ENCODE measurements at regions of chr12 and their contacts with region 1.

Region 1: GRCh38 chr12:120686690-120687577 is at the start of gene MLEC:
- DNase-seq: peak; percentile 98 to 100 (median 99)
- ATAC-seq: peak; percentile 88
- H3K4me3 ChIP-seq: peak within 1 kb of the TSS; percentile 99
- H3K4me3 Mint-ChIP-seq: peak within 1 kb of the TSS; percentile 90 to 95 (median 94)
- H3K27ac ChIP-seq: peak within 1 kb of the TSS; percentile 77
- H3K27ac Mint-ChIP-seq: peak within 1 kb of the TSS; percentile 91 to 97 (median 95)
- H3K4me1 ChIP-seq: peaks cover 12 to 22% of the 10 kb centered on the region in 2 donors
- H3K4me1 Mint-ChIP-seq: peaks cover 22 to 53% (median 41%) of the 10 kb centered on the region in 7 donors
- H3K27me3 ChIP-seq: no peaks in the 10 kb centered on the region
- H3K27me3 Mint-ChIP-seq: peaks cover 0 to 3% (median 0%) of the 10 kb centered on the region in 5 donors
- total RNA-seq, gene MLEC: 27.6 to 132 (median 57.6) TPM

Region 2: DNA sequence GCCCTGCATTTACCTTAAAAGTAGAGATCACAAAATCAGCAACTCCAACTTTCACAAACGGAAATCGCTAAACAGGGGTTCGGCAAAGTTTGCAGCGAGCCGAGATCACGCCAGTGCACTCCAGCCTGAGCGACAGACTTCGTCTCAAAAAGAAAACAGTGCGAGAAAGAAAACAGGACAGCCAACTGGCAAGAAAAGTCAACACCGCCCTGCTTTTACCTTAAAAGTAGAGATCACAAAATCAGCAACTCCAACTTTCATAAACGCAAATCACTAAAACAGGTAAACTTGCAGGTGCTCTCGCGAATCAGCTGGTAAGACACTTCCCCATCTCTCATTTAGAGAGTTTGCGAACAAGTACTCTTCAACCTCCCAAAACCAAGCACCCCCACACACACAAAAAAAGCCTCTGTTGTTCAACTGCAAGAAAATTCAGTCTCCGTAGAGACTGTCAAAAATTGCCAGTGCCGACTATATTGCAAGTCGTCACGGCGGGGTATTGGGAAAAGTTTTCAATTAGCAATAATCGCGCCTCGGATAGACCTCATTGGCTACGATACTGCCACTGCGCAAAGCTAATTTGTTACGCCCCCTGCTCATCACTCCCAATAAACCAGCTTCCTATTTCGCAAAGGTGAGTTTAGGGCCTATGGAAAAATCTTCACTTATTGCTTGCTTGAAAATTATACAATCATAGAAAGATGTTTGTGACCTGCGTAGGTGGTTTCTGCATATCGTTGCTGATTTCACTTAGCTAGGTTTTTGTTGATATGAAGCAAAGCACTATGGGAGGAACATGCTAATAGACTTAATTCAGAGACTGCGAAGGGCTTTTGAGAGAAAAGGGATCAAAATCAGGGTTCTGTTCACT is 394.0 kb before region 1 on chr12 and contains the start of gene RNU4-1:
- CTCF ChIA-PET with region 1: no interaction called
- POLR2A ChIA-PET with region 1: interaction called, 3 read pairs
- intact Hi-C with region 1: loop called in 1 of 2 experiments (anchors 1 kb)
- DNase-seq: peak; percentile 51 to 93 (median 89)
- ATAC-seq: peak; percentile 58
- H3K4me3 ChIP-seq: peak within 1 kb of the TSS; percentile 64
- H3K4me3 Mint-ChIP-seq: no peak within 1 kb of the TSS
- H3K27ac ChIP-seq: peak within 1 kb of the TSS; percentile 100
- H3K27ac Mint-ChIP-seq: peak within 1 kb of the TSS in 1 of 9 donors; percentile 62
- H3K4me1 ChIP-seq: no peaks in the 10 kb centered on the region
- H3K4me1 Mint-ChIP-seq: peaks cover 0 to 9% (median 4%) of the 10 kb centered on the region in 7 donors
- H3K27me3 ChIP-seq: no peaks in the 10 kb centered on the region
- H3K27me3 Mint-ChIP-seq: peaks cover 0 to 14% (median 0%) of the 10 kb centered on the region in 5 donors
- total RNA-seq, gene RNU4-1: 319 to 3,107 (median 1,510) TPM

Region 3: DNA sequence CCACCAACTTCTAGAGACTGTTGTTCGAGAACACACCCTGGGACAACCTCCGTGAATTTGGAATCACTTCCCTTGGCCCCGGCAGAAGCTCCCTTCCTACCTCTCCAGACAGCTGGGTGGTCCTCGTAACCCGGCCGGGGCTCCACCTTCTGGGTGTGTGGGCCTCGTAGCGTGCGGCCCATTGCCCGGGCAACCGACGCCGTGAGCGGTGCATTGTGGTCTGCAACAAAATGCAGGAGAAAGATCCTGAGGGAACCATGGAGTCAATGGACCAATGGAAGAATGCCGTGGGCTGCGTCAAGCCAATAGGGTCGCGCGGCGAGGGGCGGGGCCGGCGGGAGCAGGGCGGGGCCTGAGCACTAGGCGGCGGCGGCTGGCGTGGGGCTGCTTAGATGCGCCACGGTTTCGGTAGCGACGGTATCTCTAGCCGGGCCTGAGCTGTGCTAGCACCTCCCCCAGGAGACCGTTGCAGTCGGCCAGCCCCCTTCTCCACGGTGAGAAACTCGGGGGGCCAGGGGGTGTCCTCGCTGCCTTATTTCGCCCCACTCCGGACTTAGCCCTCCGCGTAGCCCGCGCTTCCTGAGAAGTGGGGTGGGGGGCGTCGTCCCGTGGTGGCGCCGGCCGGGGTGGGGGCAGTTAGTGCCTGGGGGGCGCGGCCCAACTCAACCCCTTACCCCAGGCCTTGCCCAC is 191.1 kb before region 1 on chr12 and contains the start of gene DYNLL1:
- CTCF ChIA-PET with region 1: no interaction called
- POLR2A ChIA-PET with region 1: no interaction called
- intact Hi-C with region 1: loop called in 1 of 2 experiments (anchors 1 kb)
- DNase-seq: peak; percentile 95 to 99 (median 97)
- ATAC-seq: peak; percentile 99
- H3K4me3 ChIP-seq: peak within 1 kb of the TSS; percentile 82
- H3K4me3 Mint-ChIP-seq: peak within 1 kb of the TSS; percentile 83 to 98 (median 94)
- H3K27ac ChIP-seq: peak within 1 kb of the TSS; percentile 84
- H3K27ac Mint-ChIP-seq: peak within 1 kb of the TSS; percentile 58 to 94 (median 90)
- H3K4me1 ChIP-seq: peaks cover 9% of the 10 kb centered on the region in 2 donors
- H3K4me1 Mint-ChIP-seq: peaks cover 13 to 48% (median 33%) of the 10 kb centered on the region in 7 donors
- H3K27me3 ChIP-seq: no peaks in the 10 kb centered on the region
- H3K27me3 Mint-ChIP-seq: no peaks in the 10 kb centered on the region
- total RNA-seq, gene DYNLL1: 35.0 to 301 (median 72.7) TPM

Region 4: DNA sequence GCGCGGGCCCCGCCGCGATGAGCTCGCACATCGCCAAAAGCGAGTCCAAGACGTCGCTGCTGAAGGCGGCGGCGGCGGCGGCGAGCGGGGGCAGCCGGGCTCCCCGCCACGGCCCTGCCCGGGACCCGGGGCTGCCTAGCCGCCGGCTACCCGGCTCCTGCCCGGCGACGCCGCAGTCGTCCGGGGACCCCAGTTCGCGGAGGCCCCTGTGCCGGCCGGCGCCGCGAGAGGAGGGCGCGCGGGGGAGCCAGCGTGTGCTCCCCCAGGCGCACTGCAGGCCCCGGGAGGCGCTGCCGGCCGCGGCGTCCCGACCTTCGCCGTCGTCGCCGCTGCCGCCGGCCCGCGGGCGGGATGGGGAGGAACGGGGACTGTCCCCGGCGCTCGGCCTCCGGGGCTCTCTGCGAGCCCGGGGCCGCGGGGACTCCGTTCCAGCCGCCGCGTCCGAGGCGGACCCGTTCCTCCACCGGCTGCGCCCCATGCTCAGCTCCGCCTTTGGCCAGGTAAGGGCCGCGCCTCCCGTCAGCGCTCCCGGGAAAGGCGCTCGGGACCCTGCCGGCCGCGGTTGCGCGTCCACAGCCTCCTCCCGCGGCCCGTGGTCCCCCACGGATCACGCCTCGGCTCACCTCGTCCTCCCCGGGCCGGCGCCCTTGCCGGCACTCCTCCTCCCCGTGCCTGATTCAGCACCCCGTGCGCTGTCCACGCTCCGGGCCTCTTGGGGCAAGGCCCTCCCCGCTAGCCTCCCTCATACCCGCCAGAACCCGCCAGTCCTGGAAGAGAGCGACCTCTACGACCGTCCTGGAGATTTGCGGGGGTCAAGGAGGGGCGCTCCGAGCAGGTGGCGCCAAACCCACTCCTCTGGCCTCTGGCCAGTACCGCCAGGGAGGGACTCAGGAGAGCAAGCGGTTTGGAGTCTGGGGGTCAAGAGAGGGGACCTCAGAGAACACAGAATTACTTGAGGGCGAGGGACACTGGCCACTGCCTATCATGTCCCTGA is 45.8 kb before region 1 on chr12:
- CTCF ChIA-PET with region 1: interaction called, 11 read pairs
- POLR2A ChIA-PET with region 1: no interaction called
- intact Hi-C with region 1: loop called in 1 of 2 experiments (anchors 1 kb)
- DNase-seq: peak; percentile 28 to 66 (median 54)
- ATAC-seq: peak; percentile 81
- H3K4me3 ChIP-seq: peak overlapping the region; percentile 44
- H3K4me3 Mint-ChIP-seq: peak overlapping the region; percentile 64 to 84 (median 73)
- H3K27ac ChIP-seq: no peak overlapping the region
- H3K27ac Mint-ChIP-seq: no peak overlapping the region
- H3K4me1 ChIP-seq: peaks cover 4 to 8% of the 10 kb centered on the region in 2 donors
- H3K4me1 Mint-ChIP-seq: peaks cover 0 to 10% (median 6%) of the 10 kb centered on the region in 7 donors
- H3K27me3 ChIP-seq: peaks cover 19 to 26% of the 10 kb centered on the region in 2 donors
- H3K27me3 Mint-ChIP-seq: peaks cover 41 to 72% (median 45%) of the 10 kb centered on the region in 5 donors

Region 5: GRCh38 chr12:120669055-120669840 is 17.7 kb before region 1 on chr12:
- CTCF ChIA-PET with region 1: no interaction called
- POLR2A ChIA-PET with region 1: no interaction called
- intact Hi-C with region 1: no loop called
- DNase-seq: no peak
- ATAC-seq: no peak
- H3K4me3 ChIP-seq: no peak overlapping the region
- H3K4me3 Mint-ChIP-seq: no peak overlapping the region
- H3K27ac ChIP-seq: no peak overlapping the region
- H3K27ac Mint-ChIP-seq: no peak overlapping the region
- H3K4me1 ChIP-seq: no peaks in the 10 kb centered on the region
- H3K4me1 Mint-ChIP-seq: peaks cover 0 to 2% (median 0%) of the 10 kb centered on the region in 7 donors
- H3K27me3 ChIP-seq: no peaks in the 10 kb centered on the region
- H3K27me3 Mint-ChIP-seq: peaks cover 0 to 2% (median 0%) of the 10 kb centered on the region in 5 donors

Region 6: GRCh38 chr12:120761519-120761934 is 74.6 kb after region 1 on chr12:
- CTCF ChIA-PET with region 1: no interaction called
- POLR2A ChIA-PET with region 1: no interaction called
- intact Hi-C with region 1: loop called in 1 of 2 experiments (anchors 2 kb)
- DNase-seq: peak in 6 of 9 donors; percentile 3 to 27 (median 14)
- ATAC-seq: peak; percentile 10
- H3K4me3 ChIP-seq: no peak overlapping the region
- H3K4me3 Mint-ChIP-seq: peak overlapping the region in 7 of 10 donors; percentile 39 to 76 (median 60)
- H3K27ac ChIP-seq: peak overlapping the region; percentile 52
- H3K27ac Mint-ChIP-seq: peak overlapping the region; percentile 58 to 98 (median 87)
- H3K4me1 ChIP-seq: no peaks in the 10 kb centered on the region
- H3K4me1 Mint-ChIP-seq: peaks cover 0 to 32% (median 19%) of the 10 kb centered on the region in 7 donors
- H3K27me3 ChIP-seq: no peaks in the 10 kb centered on the region
- H3K27me3 Mint-ChIP-seq: no peaks in the 10 kb centered on the region

Region 7: DNA sequence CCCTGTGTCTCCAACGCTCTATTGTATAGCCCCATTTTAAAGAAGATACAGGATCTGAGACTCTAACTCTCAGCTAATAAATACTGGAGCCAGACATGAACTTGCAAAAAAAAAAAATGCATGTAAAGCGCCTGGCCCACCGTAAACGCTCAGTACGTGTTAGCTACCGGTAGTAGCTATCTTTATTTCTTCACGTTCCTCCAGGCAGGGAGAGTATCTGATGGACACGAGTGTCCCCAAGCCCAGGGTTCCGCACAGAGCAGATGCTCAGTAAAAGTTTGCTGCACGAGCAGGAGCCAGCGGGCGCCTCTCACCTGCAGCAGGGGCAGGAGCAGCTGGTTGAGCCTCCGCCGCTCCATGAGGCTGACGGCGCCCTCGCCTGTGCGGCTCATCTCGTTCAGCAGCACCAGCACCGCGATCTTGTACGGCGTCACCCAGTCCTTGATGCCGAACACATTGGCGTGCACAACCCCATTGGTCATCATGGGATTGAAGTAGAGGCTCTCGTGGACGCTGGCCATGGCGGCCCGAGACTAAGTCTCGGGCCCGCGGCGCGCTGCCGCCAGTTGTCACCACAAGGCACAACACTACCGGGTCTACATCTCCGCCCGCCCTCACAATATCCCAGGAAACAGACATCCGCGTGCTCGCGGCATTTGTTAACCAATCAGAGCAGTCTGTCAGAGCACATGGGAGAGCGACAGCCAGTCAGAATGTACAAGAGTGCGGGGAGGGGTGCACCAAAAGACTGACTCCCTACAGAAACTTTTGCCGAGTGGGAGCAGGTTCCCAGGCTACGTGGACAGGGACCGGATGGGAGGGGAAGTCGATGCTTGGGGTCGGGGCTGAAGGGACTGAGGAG is 665.1 kb after region 1 on chr12 and contains the start of gene ANAPC5:
- CTCF ChIA-PET with region 1: no interaction called
- POLR2A ChIA-PET with region 1: no interaction called
- intact Hi-C with region 1: loop called in 1 of 2 experiments (anchors 2 kb)
- DNase-seq: peak; percentile 61 to 93 (median 89)
- ATAC-seq: peak; percentile 99
- H3K4me3 ChIP-seq: peak within 1 kb of the TSS; percentile 99
- H3K4me3 Mint-ChIP-seq: peak within 1 kb of the TSS; percentile 88 to 100 (median 97)
- H3K27ac ChIP-seq: peak within 1 kb of the TSS; percentile 78
- H3K27ac Mint-ChIP-seq: peak within 1 kb of the TSS; percentile 90 to 100 (median 98)
- H3K4me1 ChIP-seq: peaks cover 6 to 7% of the 10 kb centered on the region in 2 donors
- H3K4me1 Mint-ChIP-seq: peaks cover 25 to 58% (median 42%) of the 10 kb centered on the region in 7 donors
- H3K27me3 ChIP-seq: no peaks in the 10 kb centered on the region
- H3K27me3 Mint-ChIP-seq: peaks cover 0 to 5% (median 0%) of the 10 kb centered on the region in 5 donors
- total RNA-seq, gene ANAPC5: 114 to 148 (median 141) TPM

Region 8: GRCh38 chr12:121753844-121754264 is 1066.9 kb after region 1 on chr12:
- CTCF ChIA-PET with region 1: no interaction called
- POLR2A ChIA-PET with region 1: no interaction called
- intact Hi-C with region 1: no loop called
- DNase-seq: no peak
- ATAC-seq: no peak
- H3K4me3 ChIP-seq: no peak overlapping the region
- H3K4me3 Mint-ChIP-seq: no peak overlapping the region
- H3K27ac ChIP-seq: no peak overlapping the region
- H3K27ac Mint-ChIP-seq: peak overlapping the region in 1 of 9 donors; percentile 25
- H3K4me1 ChIP-seq: peaks cover 0 to 3% of the 10 kb centered on the region in 2 donors
- H3K4me1 Mint-ChIP-seq: peaks cover 5 to 19% (median 5%) of the 10 kb centered on the region in 7 donors
- H3K27me3 ChIP-seq: no peaks in the 10 kb centered on the region
- H3K27me3 Mint-ChIP-seq: no peaks in the 10 kb centered on the region

Region 9: GRCh38 chr12:122452701-122453285 is 1765.9 kb after region 1 on chr12:
- CTCF ChIA-PET with region 1: no interaction called
- POLR2A ChIA-PET with region 1: no interaction called
- intact Hi-C with region 1: loop called in 1 of 2 experiments (anchors 5 kb)
- DNase-seq: no peak
- ATAC-seq: no peak
- H3K4me3 ChIP-seq: peak overlapping the region; percentile 36
- H3K4me3 Mint-ChIP-seq: peak overlapping the region; percentile 64 to 87 (median 81)
- H3K27ac ChIP-seq: peak overlapping the region; percentile 63
- H3K27ac Mint-ChIP-seq: peak overlapping the region; percentile 91 to 99 (median 98)
- H3K4me1 ChIP-seq: peaks cover 22 to 24% of the 10 kb centered on the region in 2 donors
- H3K4me1 Mint-ChIP-seq: peaks cover 22 to 41% (median 33%) of the 10 kb centered on the region in 7 donors
- H3K27me3 ChIP-seq: no peaks in the 10 kb centered on the region
- H3K27me3 Mint-ChIP-seq: no peaks in the 10 kb centered on the region

Measured in naive thymus-derived CD4-positive, alpha-beta T cell (primary cell).